MCF 10A (cell line): ENCODE measurements at regions of chr7 and their contacts with region 1.

Region 1: GRCh38 chr7:24773646-24774045 is 16.4 kb upstream of the GSDME start:
- DNase-seq: no peak
- H3K4me3 Mint-ChIP-seq: no peak overlapping the region
- H3K27ac Mint-ChIP-seq: no peak overlapping the region
- H3K4me1 Mint-ChIP-seq: peaks cover 20% of the 10 kb centered on the region
- H3K27me3 Mint-ChIP-seq: no peaks in the 10 kb centered on the region
- CTCF ChIP-seq: no peak

Region 2: DNA sequence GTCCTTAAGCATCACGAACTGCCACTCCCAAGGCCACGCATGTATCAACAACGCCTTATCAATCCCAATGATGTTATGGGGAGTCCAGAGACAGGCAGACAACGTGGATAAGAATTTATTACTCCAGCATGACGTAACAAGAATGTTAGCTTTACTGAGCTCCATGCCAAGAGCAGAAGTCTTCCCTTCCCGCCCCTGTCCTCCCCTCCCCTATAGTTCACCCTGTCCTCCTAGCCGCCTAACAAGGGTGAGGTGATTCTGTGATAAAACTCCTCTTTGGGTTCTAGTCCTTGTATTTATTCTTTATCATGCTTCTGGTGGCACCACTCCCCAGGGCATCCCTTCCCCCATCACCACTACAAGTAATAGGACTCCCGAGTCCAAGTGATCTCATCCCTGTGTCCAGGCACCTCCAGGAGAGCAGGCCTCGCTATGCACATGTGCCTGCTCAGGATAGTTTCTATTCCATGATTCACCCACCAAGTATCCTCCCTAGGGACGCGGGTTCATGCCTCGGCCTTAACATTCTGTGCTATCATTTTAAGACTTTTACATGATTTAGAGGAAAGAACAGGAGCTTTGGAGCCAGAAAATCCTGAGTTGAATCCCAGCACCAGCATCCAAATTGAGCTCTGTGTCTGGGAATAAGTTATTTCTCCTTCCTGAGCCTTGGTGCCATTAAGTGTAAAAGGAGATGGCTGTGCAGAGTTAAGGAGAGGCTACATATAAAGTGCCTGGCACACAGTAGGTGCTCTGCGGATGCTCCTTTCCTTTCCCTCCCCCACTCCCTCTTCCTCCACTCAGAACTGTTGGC is 31.7 kb before region 1 on chr7:
- CTCF ChIA-PET with region 1: no interaction called
- POLR2A ChIA-PET with region 1: interaction called, 12 read pairs
- intact Hi-C with region 1: no loop called
- DNase-seq: peak; percentile 87
- H3K4me3 Mint-ChIP-seq: no peak overlapping the region
- H3K27ac Mint-ChIP-seq: peak overlapping the region; percentile 90
- H3K4me1 Mint-ChIP-seq: peaks cover 30% of the 10 kb centered on the region
- H3K27me3 Mint-ChIP-seq: no peaks in the 10 kb centered on the region
- CTCF ChIP-seq: no peak

Region 3: GRCh38 chr7:24757353-24758275 is 16.0 kb before region 1 on chr7 and contains the start of gene GSDME:
- CTCF ChIA-PET with region 1: interaction called, 4 read pairs
- POLR2A ChIA-PET with region 1: interaction called, 12 read pairs
- intact Hi-C with region 1: no loop called
- DNase-seq: peak; percentile 65
- H3K4me3 Mint-ChIP-seq: peak within 1 kb of the TSS; percentile 90
- H3K27ac Mint-ChIP-seq: peak within 1 kb of the TSS; percentile 92
- H3K4me1 Mint-ChIP-seq: peaks cover 23% of the 10 kb centered on the region
- H3K27me3 Mint-ChIP-seq: no peaks in the 10 kb centered on the region
- CTCF ChIP-seq: no peak
- total RNA-seq, gene GSDME: 41.6 and 46.1 TPM in 2 replicates

Region 4: GRCh38 chr7:24825931-24826661 is 52.5 kb after region 1 on chr7:
- CTCF ChIA-PET with region 1: no interaction called
- POLR2A ChIA-PET with region 1: no interaction called
- intact Hi-C with region 1: no loop called
- DNase-seq: peak; percentile 94
- H3K4me3 Mint-ChIP-seq: peak overlapping the region; percentile 54
- H3K27ac Mint-ChIP-seq: peak overlapping the region; percentile 88
- H3K4me1 Mint-ChIP-seq: peaks cover 62% of the 10 kb centered on the region
- H3K27me3 Mint-ChIP-seq: no peaks in the 10 kb centered on the region
- CTCF ChIP-seq: no peak